Endothelial cell of umbilical vein (primary cell): ENCODE measurements at regions of chr10 and their contacts with region 1.

Region 1: DNA sequence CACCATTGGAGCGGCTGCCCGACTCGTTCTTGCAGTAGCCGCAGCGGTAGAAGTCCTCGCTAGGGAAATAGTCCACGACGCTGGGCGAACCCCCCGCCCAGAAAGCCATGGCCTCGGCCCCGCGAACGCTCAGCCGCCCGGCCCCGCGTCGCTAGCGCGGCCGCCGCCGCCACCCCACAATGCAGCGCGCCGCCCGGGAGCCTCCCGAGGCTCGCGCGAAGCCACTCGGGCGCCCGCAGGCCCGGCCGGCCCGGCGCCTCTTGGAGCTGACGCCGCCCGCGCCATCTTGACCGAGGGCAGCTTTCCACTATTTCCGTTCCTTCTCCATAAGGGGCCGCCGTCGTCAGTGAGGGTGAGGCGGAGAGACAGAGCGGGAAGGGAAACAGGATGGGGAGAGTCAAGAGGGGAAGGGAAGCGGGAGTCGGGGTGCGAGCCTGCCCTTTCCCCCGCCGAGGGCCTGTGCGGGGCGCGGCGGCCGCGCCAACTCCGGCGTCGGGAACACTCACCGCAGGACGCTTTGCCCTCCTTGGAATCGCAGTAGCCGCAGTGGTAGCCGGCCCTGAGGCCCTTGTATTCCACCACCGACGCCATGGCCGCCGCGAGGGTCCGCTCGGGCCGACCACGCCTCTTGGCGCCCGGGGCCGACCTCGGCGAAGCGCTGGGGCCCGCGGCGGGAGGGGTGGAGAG is at the start of gene ATE1:
- DNase-seq: peak; percentile 94
- H3K4me3 ChIP-seq: peak within 1 kb of the TSS; percentile 61 to 97 (median 93)
- H3K27ac ChIP-seq: peak within 1 kb of the TSS; percentile 91
- H3K4me1 ChIP-seq: peaks cover 11% of the 10 kb centered on the region
- H3K27me3 ChIP-seq: no peaks in the 10 kb centered on the region
- CTCF ChIP-seq: no peak
- POLR2A ChIP-seq: peak; percentile 83
- total RNA-seq, gene ATE1: 19.1 and 27.1 TPM in 2 replicates

Region 2: GRCh38 chr10:121405096-121405495 is 522.9 kb before region 1 on chr10:
- CTCF ChIA-PET with region 1: no interaction called
- POLR2A ChIA-PET with region 1: no interaction called
- dilution Hi-C with region 1: no loop called
- intact Hi-C with region 1: no loop called
- DNase-seq: no peak
- H3K4me3 ChIP-seq: no peak overlapping the region
- H3K27ac ChIP-seq: no peak overlapping the region
- H3K4me1 ChIP-seq: no peaks in the 10 kb centered on the region
- H3K27me3 ChIP-seq: no peaks in the 10 kb centered on the region
- CTCF ChIP-seq: no peak
- POLR2A ChIP-seq: no peak

Region 3: GRCh38 chr10:121942749-121943416 is 14.9 kb after region 1 on chr10:
- CTCF ChIA-PET with region 1: interaction called, 4 read pairs
- POLR2A ChIA-PET with region 1: interaction called, 3 read pairs
- dilution Hi-C with region 1: no loop called
- intact Hi-C with region 1: loop called (anchors 1 kb)
- DNase-seq: peak; percentile 97
- H3K4me3 ChIP-seq: no peak overlapping the region
- H3K27ac ChIP-seq: peak overlapping the region; percentile 69
- H3K4me1 ChIP-seq: peaks cover 23% of the 10 kb centered on the region
- H3K27me3 ChIP-seq: no peaks in the 10 kb centered on the region
- CTCF ChIP-seq: no peak
- POLR2A ChIP-seq: no peak

Region 4: DNA sequence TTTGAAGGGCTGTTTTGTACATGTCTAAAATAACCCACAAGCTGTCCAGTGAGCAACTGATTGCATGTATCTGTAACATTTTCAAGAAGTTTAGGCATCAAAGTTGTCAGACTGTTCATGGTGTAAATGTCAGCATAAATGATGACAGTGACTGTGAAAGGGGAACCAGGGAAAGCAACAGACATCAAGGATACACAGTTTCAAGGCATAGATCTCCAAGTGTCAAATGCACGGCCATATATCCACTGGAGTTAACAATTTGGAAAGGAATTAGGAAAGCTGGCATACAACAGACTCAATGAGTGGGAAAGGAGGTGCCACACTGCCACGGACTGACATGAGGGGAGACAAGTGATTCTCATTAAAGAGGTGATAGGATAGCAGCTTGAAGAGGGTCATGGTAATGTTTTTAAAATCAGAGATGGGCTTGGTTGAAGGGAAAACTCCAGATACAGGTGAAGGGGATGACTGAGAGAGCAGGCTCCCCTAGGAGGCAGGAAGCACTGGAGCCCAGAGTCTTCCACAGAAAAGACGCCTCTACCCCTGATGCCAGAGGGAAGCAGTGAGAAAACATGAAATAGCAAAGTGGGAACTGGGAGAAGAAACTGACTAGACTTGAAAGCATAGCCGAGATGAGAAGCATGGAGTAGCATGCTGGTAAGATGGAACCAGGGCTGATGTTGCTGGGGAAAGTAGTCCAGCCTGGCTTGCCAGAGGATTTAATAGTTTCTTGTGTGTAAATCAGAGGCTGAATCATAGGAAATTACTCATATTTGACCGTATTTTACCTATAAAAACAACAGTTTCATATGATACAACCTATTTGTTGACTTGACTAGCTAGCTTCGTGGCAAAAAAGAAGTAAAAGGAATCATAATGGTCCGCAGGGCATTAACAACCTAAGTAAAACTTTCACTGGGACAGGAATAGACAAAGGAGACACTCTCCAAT is 28.4 kb after region 1 on chr10:
- CTCF ChIA-PET with region 1: interaction called, 5 read pairs
- POLR2A ChIA-PET with region 1: interaction called, 4 read pairs
- dilution Hi-C with region 1: no loop called
- intact Hi-C with region 1: loop called (anchors 1 kb)
- DNase-seq: peak; percentile 87
- H3K4me3 ChIP-seq: peak overlapping the region in 1 of 3 experiments; percentile 15
- H3K27ac ChIP-seq: peak overlapping the region; percentile 64
- H3K4me1 ChIP-seq: peaks cover 16% of the 10 kb centered on the region
- H3K27me3 ChIP-seq: no peaks in the 10 kb centered on the region
- CTCF ChIP-seq: no peak
- POLR2A ChIP-seq: no peak

Region 5: DNA sequence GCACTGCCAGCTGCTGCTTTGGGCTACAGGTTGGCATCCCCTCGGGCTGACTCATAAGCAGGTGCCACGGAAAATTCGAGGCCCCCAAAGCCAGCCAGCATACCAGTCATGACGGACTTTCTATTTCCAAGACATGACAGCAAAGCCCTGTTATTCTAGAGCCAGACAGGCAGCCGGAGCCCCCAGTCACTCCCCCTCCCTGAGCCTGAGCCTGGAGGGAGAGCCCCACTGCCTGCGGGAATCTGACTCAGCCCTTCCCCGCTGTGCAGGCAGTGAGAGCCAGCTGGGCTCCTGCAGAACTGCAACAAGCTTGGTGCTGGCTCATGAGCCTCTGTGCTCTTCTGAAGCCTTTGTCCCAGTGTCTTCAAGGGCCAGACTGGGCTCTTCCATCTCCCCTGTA is 358.9 kb after region 1 on chr10:
- CTCF ChIA-PET with region 1: no interaction called
- POLR2A ChIA-PET with region 1: no interaction called
- dilution Hi-C with region 1: no loop called
- intact Hi-C with region 1: no loop called
- DNase-seq: no peak
- H3K4me3 ChIP-seq: no peak overlapping the region
- H3K27ac ChIP-seq: no peak overlapping the region
- H3K4me1 ChIP-seq: peaks cover 2% of the 10 kb centered on the region
- H3K27me3 ChIP-seq: no peaks in the 10 kb centered on the region
- CTCF ChIP-seq: no peak
- POLR2A ChIP-seq: no peak